ENCODE measurements at regions of chr15 and their contacts with region 1.

Region 1: DNA sequence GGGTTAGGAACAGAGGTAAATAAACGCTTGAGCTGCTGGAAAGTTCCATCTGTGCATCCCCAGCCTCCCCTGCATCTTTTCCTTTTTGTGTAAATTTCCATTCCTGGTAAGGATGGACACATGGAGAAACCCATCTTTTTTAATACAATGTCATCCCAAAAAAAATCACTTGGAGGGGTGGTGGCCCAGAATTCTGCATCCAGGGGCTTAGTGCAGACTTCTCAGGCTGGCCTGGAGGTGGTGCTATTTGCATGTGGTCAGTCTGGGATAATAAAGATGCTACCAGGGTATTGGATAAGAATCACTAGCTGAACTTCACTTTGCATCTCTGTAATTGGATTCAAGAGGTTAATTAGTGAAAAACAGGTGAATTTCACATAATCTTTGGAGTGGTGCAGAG is 1.8 kb upstream of the ZSCAN2 start:
- DNase-seq: no peak
- H3K4me3 ChIP-seq: no peak overlapping the region
- H3K27ac ChIP-seq: peak overlapping the region; percentile 38
- H3K4me1 ChIP-seq: peaks cover 3% of the 10 kb centered on the region
- H3K27me3 ChIP-seq: no peaks in the 10 kb centered on the region
- CTCF ChIP-seq: peak; percentile 51

Region 2: GRCh38 chr15:84648539-84648938 is 49.6 kb after region 1 on chr15:
- intact Hi-C with region 1: loop called (anchors 10 kb)
- DNase-seq: no peak
- H3K4me3 ChIP-seq: no peak overlapping the region
- H3K27ac ChIP-seq: no peak overlapping the region
- H3K4me1 ChIP-seq: peaks cover 5% of the 10 kb centered on the region
- H3K27me3 ChIP-seq: no peaks in the 10 kb centered on the region
- CTCF ChIP-seq: no peak

Region 3: GRCh38 chr15:84773716-84774115 is 174.7 kb after region 1 on chr15:
- intact Hi-C with region 1: no loop called
- DNase-seq: no peak
- H3K4me3 ChIP-seq: no peak overlapping the region
- H3K27ac ChIP-seq: no peak overlapping the region
- H3K4me1 ChIP-seq: no peaks in the 10 kb centered on the region
- H3K27me3 ChIP-seq: no peaks in the 10 kb centered on the region
- CTCF ChIP-seq: no peak